Activated naive CD4-positive, alpha-beta T cell treated with anti-CD3 and anti-CD28 coated beads, Interleukin-2, amount 10 ng/mL, durations not matched to agents 7 days and 5 days (primary cell): ENCODE measurements at regions of chr3 and their contacts with region 1.

Region 1: DNA sequence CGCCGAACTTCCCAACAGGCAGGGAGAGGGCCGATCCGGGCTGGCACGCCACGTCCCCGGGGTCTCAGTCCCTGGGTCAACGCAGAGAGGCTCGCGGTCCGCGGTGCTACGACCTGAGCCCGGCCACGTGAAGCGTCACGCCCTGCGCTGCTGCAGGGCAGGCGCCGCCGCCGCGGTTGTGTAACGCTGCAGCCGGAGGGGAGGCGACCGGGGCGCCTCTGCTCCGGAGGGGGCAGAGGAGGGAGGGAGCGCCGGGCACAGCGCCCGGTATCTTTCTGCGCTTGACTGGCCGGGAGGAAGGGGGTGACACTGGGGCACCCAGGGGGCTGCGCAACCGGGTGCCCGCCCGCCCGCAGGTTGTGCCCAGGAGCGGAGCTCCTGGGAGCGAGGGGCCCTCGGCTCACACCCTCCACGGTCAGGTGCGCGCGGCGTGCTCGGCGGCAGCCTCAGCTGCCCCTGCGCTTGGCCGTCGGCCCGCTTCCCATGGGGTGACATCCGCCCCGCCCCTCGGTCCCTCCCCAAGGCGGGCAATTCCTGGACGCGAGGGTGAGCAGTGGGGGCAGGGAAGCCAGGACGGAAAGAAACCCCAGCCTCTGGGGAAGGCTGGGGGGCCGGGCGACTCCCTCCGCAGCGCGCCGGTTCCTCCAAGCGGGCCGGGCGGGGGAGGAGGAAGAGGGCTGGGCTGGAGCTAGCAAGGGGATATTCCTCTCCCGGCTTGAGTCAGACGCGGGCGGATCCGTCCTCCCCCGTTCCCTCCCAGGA is 852 bp upstream of the BHLHE40 start:
- DNase-seq: peak; percentile 94
- H3K4me3 Mint-ChIP-seq: peak overlapping the region; percentile 97
- H3K27ac Mint-ChIP-seq: peak overlapping the region; percentile 99
- H3K4me1 Mint-ChIP-seq: peaks cover 50% of the 10 kb centered on the region
- H3K27me3 Mint-ChIP-seq: no peaks in the 10 kb centered on the region

Region 2: GRCh38 chr3:4722103-4722502 is 256.3 kb before region 1 on chr3:
- CTCF ChIA-PET with region 1: interaction called, 158 read pairs
- DNase-seq: peak; percentile 53
- H3K4me3 Mint-ChIP-seq: no peak overlapping the region
- H3K27ac Mint-ChIP-seq: peak overlapping the region; percentile 58
- H3K4me1 Mint-ChIP-seq: peaks cover 58% of the 10 kb centered on the region
- H3K27me3 Mint-ChIP-seq: no peaks in the 10 kb centered on the region

Region 3: DNA sequence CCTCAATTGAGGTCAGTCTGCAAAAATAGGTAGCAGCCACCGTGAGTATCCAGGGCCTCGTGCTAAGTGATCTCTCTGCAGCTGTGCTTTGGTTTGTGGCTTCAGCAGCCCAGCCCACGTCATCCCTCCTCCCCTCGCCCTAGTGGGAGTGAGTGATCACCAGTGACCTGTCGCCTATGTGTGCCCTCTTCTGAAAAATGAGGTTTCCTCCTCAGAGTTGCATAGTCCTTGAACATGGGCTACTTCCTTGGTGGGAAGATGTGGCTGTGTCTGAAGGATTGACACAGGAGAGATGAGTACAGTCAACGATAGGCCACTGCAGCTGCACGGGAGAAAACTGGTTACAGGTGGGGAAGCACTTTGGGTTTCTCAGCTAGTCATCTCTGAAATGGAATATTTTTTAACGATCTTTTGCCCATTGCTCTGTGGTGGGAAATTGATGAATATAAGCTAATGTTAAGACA is 143.9 kb before region 1 on chr3:
- CTCF ChIA-PET with region 1: interaction called, 16 read pairs
- DNase-seq: peak; percentile 84
- H3K4me3 Mint-ChIP-seq: peak overlapping the region; percentile 53
- H3K27ac Mint-ChIP-seq: peak overlapping the region; percentile 96
- H3K4me1 Mint-ChIP-seq: peaks cover 90% of the 10 kb centered on the region
- H3K27me3 Mint-ChIP-seq: no peaks in the 10 kb centered on the region

Region 4: DNA sequence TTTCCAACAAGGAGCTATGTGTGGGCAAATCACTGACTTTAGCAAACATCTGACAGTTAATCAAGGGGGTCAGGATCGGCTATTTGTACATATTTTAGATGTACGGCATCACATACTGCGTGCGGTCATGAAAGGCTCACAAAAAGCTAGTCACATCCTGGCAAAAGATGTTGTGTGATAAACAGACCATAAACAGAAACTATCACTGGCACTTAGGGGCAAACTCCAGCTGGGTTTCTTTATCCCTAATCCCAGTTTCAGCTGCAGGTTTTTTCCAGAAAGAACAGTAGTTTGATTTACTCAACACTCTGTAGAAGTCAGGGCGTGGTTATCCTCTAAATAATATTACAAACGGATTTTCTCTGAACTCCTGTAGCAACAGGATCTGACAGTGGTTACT is 111.5 kb before region 1 on chr3:
- CTCF ChIA-PET with region 1: interaction called, 11 read pairs
- DNase-seq: no peak
- H3K4me3 Mint-ChIP-seq: peak overlapping the region; percentile 77
- H3K27ac Mint-ChIP-seq: peak overlapping the region; percentile 92
- H3K4me1 Mint-ChIP-seq: peaks cover 52% of the 10 kb centered on the region
- H3K27me3 Mint-ChIP-seq: no peaks in the 10 kb centered on the region

Region 5: DNA sequence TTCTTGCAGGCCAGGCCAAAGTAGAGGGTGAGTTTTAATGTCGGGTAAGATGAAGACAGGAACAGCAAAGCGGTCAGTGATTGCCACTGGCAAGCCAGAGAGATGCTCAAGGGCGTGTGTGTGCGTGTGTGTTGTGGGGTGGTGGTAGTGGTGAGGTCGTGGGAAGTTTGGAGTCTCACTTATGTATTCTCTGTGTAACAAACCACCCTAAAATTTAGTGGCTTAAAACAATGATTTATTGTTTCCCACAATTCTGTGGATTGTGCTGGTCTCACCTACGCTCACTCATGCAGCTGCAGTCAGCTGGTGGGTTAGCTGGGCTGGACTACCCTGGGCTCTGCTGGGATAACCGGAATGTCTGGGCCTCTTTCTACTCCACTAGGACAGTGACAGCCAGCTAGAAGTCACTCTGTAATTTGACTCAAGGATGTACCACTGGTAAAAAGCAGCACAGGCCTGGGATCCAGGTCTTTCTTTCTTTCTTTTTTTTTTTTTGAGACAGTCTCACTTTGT is 50.1 kb before region 1 on chr3:
- CTCF ChIA-PET with region 1: interaction called, 11 read pairs
- DNase-seq: no peak
- H3K4me3 Mint-ChIP-seq: no peak overlapping the region
- H3K27ac Mint-ChIP-seq: peak overlapping the region; percentile 19
- H3K4me1 Mint-ChIP-seq: peaks cover 37% of the 10 kb centered on the region
- H3K27me3 Mint-ChIP-seq: no peaks in the 10 kb centered on the region

Region 6: DNA sequence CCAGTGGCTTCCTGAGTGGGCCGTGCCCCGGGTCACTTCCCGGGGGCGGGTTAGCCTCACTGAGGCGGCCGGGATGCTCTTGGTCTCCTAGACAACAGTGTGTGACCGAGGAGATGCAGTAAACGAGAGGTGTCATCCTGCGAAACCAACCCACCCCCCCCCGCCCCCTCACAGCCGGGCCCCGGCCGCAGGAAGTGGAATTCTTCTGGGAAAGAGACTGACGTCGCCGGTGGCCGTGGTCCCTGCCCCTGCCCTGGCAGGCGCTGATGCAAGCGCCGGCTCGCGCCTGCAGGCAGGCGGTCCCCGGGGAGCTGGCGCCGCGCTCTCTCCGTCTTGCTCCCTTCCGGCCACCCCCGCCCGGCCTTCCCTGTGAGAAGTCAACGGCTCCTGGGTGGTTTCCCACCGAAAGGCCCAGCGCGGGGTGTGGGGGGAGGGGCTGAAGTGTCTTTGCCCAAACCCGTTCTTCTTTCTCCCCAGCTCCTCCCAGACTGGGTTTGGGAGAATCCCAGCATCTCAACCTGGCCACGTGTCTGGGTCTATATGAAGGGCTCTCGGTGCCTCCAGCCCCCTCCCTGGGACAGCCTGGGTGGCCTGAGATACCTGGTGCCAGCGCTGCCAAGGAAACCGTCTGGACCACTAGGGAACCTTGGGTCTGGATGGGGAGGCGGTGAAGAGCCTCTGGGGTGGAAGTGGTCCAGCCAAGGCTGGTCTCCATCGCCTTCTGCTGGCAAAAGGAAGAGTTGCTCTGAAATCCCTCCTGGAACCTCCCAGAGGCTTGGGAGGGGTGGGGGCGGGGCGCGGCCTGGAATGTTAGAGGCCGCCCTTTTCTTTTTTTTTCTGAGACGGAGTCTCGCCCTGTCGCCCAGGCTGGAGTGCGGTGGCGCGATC is 48.2 kb after region 1 on chr3:
- CTCF ChIA-PET with region 1: interaction called, 112 read pairs
- DNase-seq: peak; percentile 71
- H3K4me3 Mint-ChIP-seq: peak overlapping the region; percentile 76
- H3K27ac Mint-ChIP-seq: peak overlapping the region; percentile 45
- H3K4me1 Mint-ChIP-seq: peaks cover 51% of the 10 kb centered on the region
- H3K27me3 Mint-ChIP-seq: peaks cover 35% of the 10 kb centered on the region